A549 (cell line): ENCODE measurements at regions of chr3 and their contacts with region 1.

Region 1: DNA sequence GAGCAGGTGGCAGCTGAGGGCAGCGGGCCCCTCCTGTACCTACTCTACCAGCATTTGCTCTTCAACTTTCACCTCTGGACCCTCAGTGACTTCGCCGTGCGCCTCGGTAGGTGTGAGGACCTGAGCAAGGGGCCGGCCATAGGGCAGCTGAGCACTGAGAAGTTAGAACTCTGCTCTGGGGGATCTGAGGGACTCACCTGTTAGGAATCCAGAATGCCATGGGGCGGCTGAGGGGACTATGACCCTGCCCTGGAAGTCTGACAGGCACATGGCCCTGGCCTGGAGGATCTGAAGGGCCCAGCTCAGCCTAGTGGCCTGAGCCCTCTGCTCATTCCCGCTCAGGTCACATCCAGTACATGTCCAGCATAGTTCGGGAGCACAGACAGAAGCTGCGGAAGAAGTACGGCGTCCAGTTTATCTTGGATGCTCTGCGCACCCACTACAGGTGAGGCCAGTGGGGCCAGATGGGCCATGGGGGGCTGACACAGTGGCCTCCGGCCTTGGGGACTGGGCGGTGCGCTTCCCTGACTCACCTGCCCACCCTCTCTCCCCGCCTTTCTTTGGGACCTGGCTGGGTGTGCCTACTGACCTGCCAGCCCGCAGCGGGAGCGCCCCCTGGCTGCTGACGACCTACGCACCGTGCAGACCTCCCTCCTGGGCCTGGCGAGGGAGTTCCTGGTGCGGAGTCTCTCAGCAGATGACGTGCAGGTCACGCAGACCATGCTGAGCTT is 18.8 kb downstream of the NBEAL2 start:
- DNase-seq: peak; percentile 64 to 69
- ATAC-seq: peak; percentile 77 to 91
- H3K4me3 ChIP-seq: no peak overlapping the region
- H3K27ac ChIP-seq: peak overlapping the region in 1 of 2 experiments; percentile 53; a peak in 4 of 6 replicates
- H3K4me1 ChIP-seq: peaks cover 12% of the 10 kb centered on the region
- CTCF ChIP-seq: peak; percentile 64
- EP300 ChIP-seq: no peak
- POLR2A ChIP-seq: no peak
- RAD21 ChIP-seq: peak; percentile 80 to 81

Region 2: DNA sequence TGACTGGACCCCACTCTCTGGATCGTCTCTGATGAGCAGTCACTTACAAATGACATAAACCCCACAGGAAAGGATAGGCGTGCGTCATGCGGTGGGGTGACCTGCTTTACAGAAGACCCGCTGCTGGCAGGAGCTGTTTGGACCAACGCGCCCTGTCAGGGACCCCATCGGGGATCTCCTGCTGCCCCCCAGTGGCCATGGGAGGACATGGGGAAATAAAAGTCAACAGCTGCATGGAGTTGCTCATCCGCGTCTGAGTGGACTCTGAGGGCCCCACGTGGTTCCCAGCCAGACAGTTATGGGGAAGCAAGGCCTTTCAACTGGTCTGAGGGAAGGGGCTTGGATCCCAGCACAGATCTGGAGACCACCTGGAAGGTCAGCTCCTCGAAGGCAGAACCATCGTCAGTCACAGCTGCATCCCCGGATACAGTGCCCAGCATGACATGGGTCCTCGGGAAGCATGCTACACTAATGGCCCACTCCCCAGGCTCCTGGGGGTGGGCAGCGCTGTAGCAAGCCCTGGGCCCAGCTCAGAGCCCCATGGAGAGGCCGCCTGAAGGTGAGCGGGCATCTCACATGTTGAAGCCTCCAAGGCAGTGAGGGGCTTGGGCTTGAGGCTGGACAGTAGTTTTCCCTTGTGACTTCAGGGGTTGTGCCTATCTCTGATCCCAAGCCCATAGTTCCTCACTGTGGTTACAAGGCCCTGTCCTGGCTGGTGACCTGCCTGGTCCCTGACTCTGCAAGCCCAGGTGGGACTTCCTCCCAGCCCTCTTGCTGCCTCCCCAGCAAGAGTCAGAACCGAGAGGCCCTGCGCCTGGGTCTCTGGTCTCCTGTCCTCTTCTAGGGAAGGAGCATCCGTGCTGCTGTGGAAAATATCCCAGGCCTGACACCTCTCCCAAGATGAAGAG is 88.5 kb before region 1 on chr3:
- CTCF ChIA-PET with region 1: interaction called, 18 read pairs
- POLR2A ChIA-PET with region 1: no interaction called
- DNase-seq: peak; percentile 70 to 88
- ATAC-seq: peak; percentile 73 to 88
- H3K4me3 ChIP-seq: no peak overlapping the region
- H3K27ac ChIP-seq: peak overlapping the region; percentile 53 to 76; a peak in 5 of 6 replicates
- H3K4me1 ChIP-seq: peaks cover 17% of the 10 kb centered on the region
- CTCF ChIP-seq: peak; percentile 72
- EP300 ChIP-seq: no peak
- POLR2A ChIP-seq: no peak
- RAD21 ChIP-seq: peak; percentile 72 to 79

Region 3: DNA sequence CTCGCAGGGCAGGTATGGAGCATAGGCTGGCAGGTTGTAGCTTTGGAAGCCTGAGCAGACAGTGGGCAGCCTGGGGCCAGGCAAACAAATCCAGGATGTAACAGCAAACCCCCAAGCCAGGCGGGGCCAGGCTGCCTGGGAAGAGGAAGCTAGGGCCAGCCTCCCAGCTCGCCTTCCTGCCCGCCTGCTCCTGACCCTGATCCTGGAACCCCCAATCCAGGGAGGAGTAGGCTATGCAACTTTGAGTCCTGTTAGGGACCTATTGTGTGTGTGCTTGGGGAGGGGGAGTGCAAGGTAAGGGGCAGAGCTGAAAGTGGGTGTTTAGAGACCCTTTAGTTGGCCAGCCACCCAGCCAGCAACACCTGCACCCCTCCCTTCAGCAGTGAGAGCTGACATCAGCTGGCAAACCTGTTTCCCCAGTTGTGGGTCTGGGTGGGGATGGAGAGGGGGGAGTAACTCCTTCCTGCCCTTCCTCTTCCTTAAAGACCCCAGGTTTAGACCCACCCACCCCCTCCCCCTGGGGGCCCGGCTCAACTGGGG is 16.3 kb before region 1 on chr3:
- CTCF ChIA-PET with region 1: interaction called, 13 read pairs
- POLR2A ChIA-PET with region 1: interaction called, 5 read pairs
- DNase-seq: no peak
- ATAC-seq: no peak
- H3K4me3 ChIP-seq: no peak overlapping the region
- H3K27ac ChIP-seq: peak overlapping the region in 1 of 2 experiments; percentile 45; a peak in 1 of 6 replicates
- H3K4me1 ChIP-seq: peaks cover 44% of the 10 kb centered on the region
- CTCF ChIP-seq: no peak
- EP300 ChIP-seq: no peak
- POLR2A ChIP-seq: no peak
- RAD21 ChIP-seq: no peak